CD4-positive, alpha-beta memory T cell (primary cell): ENCODE measurements at regions of chr12 and their contacts with region 1.

Region 1: GRCh38 chr12:92570056-92570753 is 132.6 kb upstream of the PLEKHG7 start:
- DNase-seq: peak; percentile 54 to 76 (median 74)
- H3K4me3 ChIP-seq: no peak overlapping the region
- H3K4me3 Mint-ChIP-seq: no peak overlapping the region
- H3K27ac ChIP-seq: no peak overlapping the region
- H3K27ac Mint-ChIP-seq: no peak overlapping the region
- H3K4me1 ChIP-seq: peaks cover 26% of the 10 kb centered on the region
- H3K4me1 Mint-ChIP-seq: peaks cover 4 to 17% (median 10%) of the 10 kb centered on the region in 4 donors
- H3K27me3 ChIP-seq: no peaks in the 10 kb centered on the region
- H3K27me3 Mint-ChIP-seq: no peaks in the 10 kb centered on the region

Region 2: GRCh38 chr12:91577586-91578539 is 992.3 kb before region 1 on chr12:
- CTCF ChIA-PET with region 1: interaction called, 31 read pairs
- POLR2A ChIA-PET with region 1: no interaction called
- intact Hi-C with region 1: loop called (anchors 1 kb)
- DNase-seq: peak in 4 of 5 donors; percentile 33 to 44 (median 42)
- H3K4me3 ChIP-seq: peak overlapping the region; percentile 18 to 50
- H3K4me3 Mint-ChIP-seq: peak overlapping the region; percentile 77 to 91 (median 84)
- H3K27ac ChIP-seq: no peak overlapping the region
- H3K27ac Mint-ChIP-seq: peak overlapping the region in 5 of 7 donors; percentile 33 to 91 (median 77)
- H3K4me1 ChIP-seq: peaks cover 4% of the 10 kb centered on the region
- H3K4me1 Mint-ChIP-seq: peaks cover 4 to 9% (median 5%) of the 10 kb centered on the region in 4 donors
- H3K27me3 ChIP-seq: no peaks in the 10 kb centered on the region
- H3K27me3 Mint-ChIP-seq: peaks cover 1 to 3% of the 10 kb centered on the region in 2 donors

Region 3: DNA sequence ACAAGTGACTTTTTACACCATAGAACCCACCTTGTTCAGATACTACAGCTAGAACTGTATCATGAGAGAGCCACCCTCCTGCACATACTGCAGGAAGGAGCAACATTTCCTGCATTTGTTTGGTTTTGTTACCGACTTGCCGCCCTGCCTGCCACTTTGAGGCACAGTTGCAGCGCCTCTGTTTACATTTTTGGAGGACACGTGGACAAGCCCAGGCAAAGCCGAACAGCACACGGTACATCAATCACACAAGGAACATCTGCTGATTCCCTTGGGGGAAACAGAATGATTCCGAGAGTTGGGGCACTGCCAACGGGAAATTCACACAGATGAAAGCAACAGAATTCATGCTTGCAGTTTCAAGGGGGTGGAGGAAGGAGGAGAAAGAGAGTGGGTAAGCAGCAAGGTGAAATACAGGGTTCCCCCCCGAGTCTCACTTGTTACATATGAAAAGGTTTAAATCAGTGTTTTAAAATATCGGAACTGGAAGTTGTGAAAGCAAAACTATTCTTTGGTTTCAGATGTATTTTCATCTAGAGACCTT is 535.3 kb before region 1 on chr12:
- CTCF ChIA-PET with region 1: no interaction called
- POLR2A ChIA-PET with region 1: interaction called, 6 read pairs
- intact Hi-C with region 1: loop called (anchors 2 kb)
- DNase-seq: peak; percentile 55 to 62 (median 59)
- H3K4me3 ChIP-seq: peak overlapping the region; percentile 24 to 44
- H3K4me3 Mint-ChIP-seq: peak overlapping the region; percentile 83 to 97 (median 91)
- H3K27ac ChIP-seq: peak overlapping the region; percentile 65
- H3K27ac Mint-ChIP-seq: peak overlapping the region; percentile 97 to 100 (median 98)
- H3K4me1 ChIP-seq: peaks cover 92% of the 10 kb centered on the region
- H3K4me1 Mint-ChIP-seq: peaks cover 66 to 97% (median 81%) of the 10 kb centered on the region in 4 donors
- H3K27me3 ChIP-seq: no peaks in the 10 kb centered on the region
- H3K27me3 Mint-ChIP-seq: no peaks in the 10 kb centered on the region

Region 4: DNA sequence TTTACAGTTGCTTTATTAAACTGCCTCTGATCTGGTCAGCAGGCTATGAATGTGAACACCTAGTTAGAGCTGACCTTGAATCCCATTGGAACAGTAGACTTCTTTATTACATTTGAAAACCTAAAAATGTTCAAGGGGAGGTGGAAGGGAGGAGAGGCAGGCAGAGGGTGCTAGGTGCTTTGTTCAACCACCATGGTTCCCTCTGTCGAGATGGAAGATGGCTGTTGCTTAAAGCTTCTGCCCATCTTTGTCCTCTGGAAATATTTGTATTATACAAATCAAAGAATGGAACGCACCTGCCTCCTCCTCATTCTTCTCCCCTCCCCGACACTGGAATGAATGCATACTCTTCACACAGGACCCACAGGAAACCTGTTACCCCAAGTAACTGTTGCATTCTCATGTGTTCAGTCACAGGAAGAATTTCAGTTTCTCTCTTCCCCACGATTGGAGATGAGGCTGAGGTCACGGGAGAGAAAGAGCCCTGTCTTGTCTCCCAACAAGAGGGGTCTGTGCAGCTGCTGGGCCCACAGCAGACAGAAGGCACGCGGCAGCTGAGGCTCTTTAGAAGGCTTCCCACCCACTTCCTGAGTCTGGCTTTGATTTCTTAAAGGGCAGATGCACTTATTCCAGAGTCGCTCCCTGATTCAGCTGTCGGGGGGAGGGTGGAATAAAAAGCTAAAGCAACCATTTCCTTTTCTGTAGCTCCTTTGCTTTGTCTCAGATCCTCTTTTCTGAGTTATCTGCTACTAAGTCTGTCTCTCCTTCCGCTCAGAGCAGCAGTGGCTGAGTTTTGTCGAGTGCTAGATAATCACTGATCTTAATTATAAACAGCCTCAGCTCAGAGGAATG is 206.7 kb before region 1 on chr12:
- CTCF ChIA-PET with region 1: interaction called, 5 read pairs
- POLR2A ChIA-PET with region 1: interaction called, 10 read pairs
- intact Hi-C with region 1: no loop called
- DNase-seq: peak; percentile 40 to 76 (median 49)
- H3K4me3 ChIP-seq: peak overlapping the region; percentile 14 to 34
- H3K4me3 Mint-ChIP-seq: peak overlapping the region; percentile 44 to 92 (median 78)
- H3K27ac ChIP-seq: peak overlapping the region; percentile 41
- H3K27ac Mint-ChIP-seq: peak overlapping the region; percentile 85 to 97 (median 94)
- H3K4me1 ChIP-seq: peaks cover 66% of the 10 kb centered on the region
- H3K4me1 Mint-ChIP-seq: peaks cover 42 to 75% (median 60%) of the 10 kb centered on the region in 4 donors
- H3K27me3 ChIP-seq: no peaks in the 10 kb centered on the region
- H3K27me3 Mint-ChIP-seq: no peaks in the 10 kb centered on the region

Region 5: GRCh38 chr12:92462049-92462448 is 108.2 kb before region 1 on chr12:
- CTCF ChIA-PET with region 1: interaction called, 3 read pairs
- POLR2A ChIA-PET with region 1: interaction called, 12 read pairs
- intact Hi-C with region 1: no loop called
- DNase-seq: peak in 3 of 5 donors; percentile 10 to 28 (median 15)
- H3K4me3 ChIP-seq: no peak overlapping the region
- H3K4me3 Mint-ChIP-seq: peak overlapping the region in 6 of 8 donors; percentile 15 to 59 (median 46)
- H3K27ac ChIP-seq: peak overlapping the region; percentile 36
- H3K27ac Mint-ChIP-seq: peak overlapping the region; percentile 48 to 80 (median 76)
- H3K4me1 ChIP-seq: peaks cover 45% of the 10 kb centered on the region
- H3K4me1 Mint-ChIP-seq: peaks cover 22 to 46% (median 27%) of the 10 kb centered on the region in 4 donors
- H3K27me3 ChIP-seq: no peaks in the 10 kb centered on the region
- H3K27me3 Mint-ChIP-seq: no peaks in the 10 kb centered on the region

Region 6: GRCh38 chr12:92593734-92594402 is 23.7 kb after region 1 on chr12:
- CTCF ChIA-PET with region 1: interaction called, 12 read pairs
- POLR2A ChIA-PET with region 1: interaction called, 15 read pairs
- intact Hi-C with region 1: loop called (anchors 1 kb)
- DNase-seq: peak; percentile 87 to 97 (median 94)
- H3K4me3 ChIP-seq: peak overlapping the region in 1 of 2 donors; percentile 37
- H3K4me3 Mint-ChIP-seq: peak overlapping the region in 7 of 8 donors; percentile 43 to 88 (median 71)
- H3K27ac ChIP-seq: peak overlapping the region; percentile 91
- H3K27ac Mint-ChIP-seq: peak overlapping the region; percentile 86 to 100 (median 100)
- H3K4me1 ChIP-seq: peaks cover 35% of the 10 kb centered on the region
- H3K4me1 Mint-ChIP-seq: peaks cover 27 to 38% (median 35%) of the 10 kb centered on the region in 4 donors
- H3K27me3 ChIP-seq: no peaks in the 10 kb centered on the region
- H3K27me3 Mint-ChIP-seq: no peaks in the 10 kb centered on the region

Region 7: GRCh38 chr12:92717202-92717601 is 147.0 kb after region 1 on chr12:
- CTCF ChIA-PET with region 1: no interaction called
- POLR2A ChIA-PET with region 1: no interaction called
- intact Hi-C with region 1: no loop called
- DNase-seq: no peak
- H3K4me3 ChIP-seq: no peak overlapping the region
- H3K4me3 Mint-ChIP-seq: no peak overlapping the region
- H3K27ac ChIP-seq: no peak overlapping the region
- H3K27ac Mint-ChIP-seq: no peak overlapping the region
- H3K4me1 ChIP-seq: no peaks in the 10 kb centered on the region
- H3K4me1 Mint-ChIP-seq: no peaks in the 10 kb centered on the region
- H3K27me3 ChIP-seq: no peaks in the 10 kb centered on the region
- H3K27me3 Mint-ChIP-seq: no peaks in the 10 kb centered on the region